ENCODE measurements at regions of chr2 and their contacts with region 1.

Region 1: DNA sequence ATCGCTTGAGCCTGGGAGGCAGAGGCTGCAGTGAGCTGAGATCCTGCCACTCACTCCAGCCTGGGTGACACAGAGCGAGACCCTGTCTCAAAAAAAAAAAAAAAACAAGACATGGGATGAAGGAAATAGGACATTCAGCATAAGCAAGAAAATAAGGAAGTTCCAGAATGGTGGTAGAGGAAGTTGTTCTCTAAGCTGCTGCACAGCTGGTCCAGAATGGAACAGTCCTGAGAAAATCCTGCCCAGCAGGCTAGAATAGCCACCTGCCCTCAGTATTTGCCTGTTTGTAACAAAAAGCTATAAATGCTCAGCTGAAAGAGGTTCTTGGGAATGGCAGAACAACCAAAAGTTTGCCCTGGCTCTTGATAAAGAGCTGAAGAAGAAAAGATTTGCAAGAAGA is 11.1 kb upstream of the MAPRE3 start:
- H3K4me3 Mint-ChIP-seq: no peak overlapping the region
- H3K27ac Mint-ChIP-seq: no peak overlapping the region
- H3K4me1 Mint-ChIP-seq: peaks cover 18% of the 10 kb centered on the region
- H3K27me3 Mint-ChIP-seq: peaks cover 31% of the 10 kb centered on the region

Region 2: GRCh38 chr2:26993768-26994167 is 34.4 kb after region 1 on chr2:
- intact Hi-C with region 1: no loop called
- H3K4me3 Mint-ChIP-seq: no peak overlapping the region
- H3K27ac Mint-ChIP-seq: no peak overlapping the region
- H3K4me1 Mint-ChIP-seq: no peaks in the 10 kb centered on the region
- H3K27me3 Mint-ChIP-seq: peaks cover 3% of the 10 kb centered on the region

Region 3: GRCh38 chr2:27016801-27017325 is 57.5 kb after region 1 on chr2:
- intact Hi-C with region 1: loop called (anchors 1 kb)
- H3K4me3 Mint-ChIP-seq: no peak overlapping the region
- H3K27ac Mint-ChIP-seq: no peak overlapping the region
- H3K4me1 Mint-ChIP-seq: peaks cover 10% of the 10 kb centered on the region
- H3K27me3 Mint-ChIP-seq: peaks cover 2% of the 10 kb centered on the region

Region 4: GRCh38 chr2:27050281-27050995 is 91.1 kb after region 1 on chr2:
- intact Hi-C with region 1: no loop called
- H3K4me3 Mint-ChIP-seq: peak overlapping the region; percentile 91
- H3K27ac Mint-ChIP-seq: peak overlapping the region; percentile 80
- H3K4me1 Mint-ChIP-seq: peaks cover 27% of the 10 kb centered on the region
- H3K27me3 Mint-ChIP-seq: peaks cover 6% of the 10 kb centered on the region